ENCODE measurements at regions of chr7 and their contacts with region 1.

Region 1: GRCh38 chr7:116984917-116985316 is 31.6 kb downstream of the ST7 start:
- DNase-seq: no peak
- H3K4me3 ChIP-seq: no peak overlapping the region
- H3K27ac ChIP-seq: no peak overlapping the region
- H3K4me1 ChIP-seq: peaks cover 32% of the 10 kb centered on the region
- H3K27me3 ChIP-seq: no peaks in the 10 kb centered on the region
- CTCF ChIP-seq: peak; percentile 79

Region 2: GRCh38 chr7:117119192-117119924 is 134.4 kb after region 1 on chr7:
- intact Hi-C with region 1: loop called (anchors 2 kb)
- DNase-seq: peak; percentile 72
- H3K4me3 ChIP-seq: no peak overlapping the region
- H3K27ac ChIP-seq: no peak overlapping the region
- H3K4me1 ChIP-seq: peaks cover 29% of the 10 kb centered on the region
- H3K27me3 ChIP-seq: no peaks in the 10 kb centered on the region
- CTCF ChIP-seq: peak; percentile 91